Activated B cell treated with CpG ODN at 0.5 μM for 24 hours (primary cell): ENCODE measurements at regions of chr11 and their contacts with region 1.

Region 1: DNA sequence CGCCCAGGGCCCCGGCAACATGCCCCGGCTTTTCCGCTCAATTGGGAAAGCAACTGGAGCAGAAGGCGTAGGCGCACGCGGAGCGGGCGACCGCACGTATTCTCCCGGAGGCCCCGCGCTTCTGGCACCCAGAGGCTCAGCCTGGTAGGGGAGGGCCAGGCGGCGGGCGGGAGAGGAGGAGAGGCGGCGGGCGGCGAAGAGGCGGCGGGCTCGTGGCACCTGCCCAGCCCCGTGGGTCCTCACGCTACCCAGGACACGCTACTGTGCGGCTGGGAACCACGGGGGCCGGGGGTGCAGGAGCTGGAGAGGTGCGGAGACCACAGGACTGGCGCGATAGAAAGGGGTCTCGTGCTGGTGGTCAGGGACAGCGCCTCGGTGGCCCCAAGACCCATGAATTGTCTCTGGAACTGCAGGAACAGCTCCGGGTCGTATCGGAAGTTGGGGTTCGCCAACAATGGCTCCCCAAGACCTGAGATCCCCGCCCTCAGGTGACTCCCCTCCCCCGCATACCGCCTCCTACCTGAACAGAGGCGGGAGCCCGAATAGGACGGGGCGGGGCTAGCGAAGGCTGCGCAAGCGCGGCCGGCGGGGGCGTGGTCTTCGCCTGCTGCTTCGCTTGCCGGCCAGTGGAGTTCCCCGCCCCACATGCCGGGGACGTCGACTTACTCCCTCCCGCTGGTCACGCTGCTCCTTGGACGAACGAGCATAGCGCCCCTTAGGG is at the start of gene SLC37A4:
- DNase-seq: peak; percentile 99
- ATAC-seq: peak; percentile 95
- H3K4me3 Mint-ChIP-seq: peak within 1 kb of the TSS; percentile 85
- H3K27ac Mint-ChIP-seq: peak within 1 kb of the TSS; percentile 61
- H3K4me1 Mint-ChIP-seq: peaks cover 15% of the 10 kb centered on the region
- H3K27me3 Mint-ChIP-seq: no peaks in the 10 kb centered on the region
- CTCF ChIP-seq: no peak
- total RNA-seq, gene SLC37A4: 12.0 and 12.1 TPM in 2 replicates

Region 2: DNA sequence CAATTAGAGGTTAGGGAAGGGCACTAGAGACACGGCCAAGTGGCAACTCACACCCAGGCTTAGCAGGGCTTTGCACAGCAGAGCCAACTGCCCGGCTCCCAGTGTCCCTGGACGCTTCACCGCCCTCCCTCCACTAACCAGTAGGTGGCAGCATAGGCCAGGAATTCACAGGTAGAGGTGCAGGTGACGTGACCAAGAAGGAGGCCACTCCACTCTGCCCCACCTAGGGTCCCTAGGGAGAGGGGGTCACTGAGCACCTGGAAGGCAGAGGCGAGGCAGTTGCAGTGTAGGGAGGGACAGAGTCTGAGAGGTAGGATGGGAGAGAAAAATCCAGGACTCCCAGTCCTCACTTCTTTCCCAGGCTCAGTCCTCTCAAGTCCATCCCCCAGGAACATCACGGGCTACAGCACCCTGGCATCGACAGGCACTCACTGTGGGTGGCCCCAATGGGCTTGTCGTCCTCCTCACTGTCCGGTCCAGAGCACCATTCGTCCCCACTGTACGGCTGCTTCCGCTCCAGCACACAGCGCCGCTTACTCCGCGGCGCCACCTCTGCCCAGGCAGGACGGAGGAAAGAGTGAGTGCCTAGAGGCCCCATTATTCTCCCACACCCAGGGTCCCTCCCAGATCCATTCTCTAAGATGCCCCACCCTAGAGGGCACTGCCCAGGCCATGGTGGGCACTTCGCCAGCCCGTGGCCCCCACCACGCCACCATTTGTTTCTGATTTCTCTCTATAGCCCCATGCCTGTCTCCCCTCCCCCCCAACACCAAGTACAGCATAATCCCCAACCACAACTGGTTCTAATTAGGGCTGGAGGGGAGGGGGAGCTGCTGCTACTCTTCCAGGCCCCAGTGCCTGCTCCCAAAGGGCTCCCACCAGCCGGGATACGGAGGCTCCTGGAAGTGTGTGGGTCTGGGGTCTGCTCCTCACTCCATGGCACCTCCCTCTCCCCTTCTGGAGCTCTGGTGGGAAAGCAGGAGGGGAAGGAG is 123.1 kb before region 1 on chr11:
- CTCF ChIA-PET with region 1: no interaction called
- POLR2A ChIA-PET with region 1: no interaction called
- intact Hi-C with region 1: loop called (anchors 2 kb)
- DNase-seq: peak; percentile 77
- ATAC-seq: peak; percentile 85
- H3K4me3 Mint-ChIP-seq: no peak overlapping the region
- H3K27ac Mint-ChIP-seq: peak overlapping the region; percentile 53
- H3K4me1 Mint-ChIP-seq: peaks cover 39% of the 10 kb centered on the region
- H3K27me3 Mint-ChIP-seq: no peaks in the 10 kb centered on the region
- CTCF ChIP-seq: peak; percentile 64

Region 3: GRCh38 chr11:118997627-118998387 is 32.7 kb before region 1 on chr11 and contains the start of gene CENATAC:
- CTCF ChIA-PET with region 1: no interaction called
- POLR2A ChIA-PET with region 1: interaction called, 4 read pairs
- intact Hi-C with region 1: loop called (anchors 1 kb)
- DNase-seq: peak; percentile 91
- ATAC-seq: peak; percentile 95
- H3K4me3 Mint-ChIP-seq: peak within 1 kb of the TSS; percentile 95
- H3K27ac Mint-ChIP-seq: peak within 1 kb of the TSS; percentile 91
- H3K4me1 Mint-ChIP-seq: peaks cover 32% of the 10 kb centered on the region
- H3K27me3 Mint-ChIP-seq: no peaks in the 10 kb centered on the region
- CTCF ChIP-seq: no peak
- total RNA-seq, gene CENATAC: 66.4 and 85.7 TPM in 2 replicates

Region 4: GRCh38 chr11:119051440-119052162 is 21.1 kb after region 1 on chr11:
- CTCF ChIA-PET with region 1: no interaction called
- POLR2A ChIA-PET with region 1: interaction called, 7 read pairs
- intact Hi-C with region 1: loop called (anchors 1 kb)
- DNase-seq: peak; percentile 47
- ATAC-seq: peak; percentile 85
- H3K4me3 Mint-ChIP-seq: peak overlapping the region; percentile 39
- H3K27ac Mint-ChIP-seq: peak overlapping the region; percentile 71
- H3K4me1 Mint-ChIP-seq: peaks cover 40% of the 10 kb centered on the region
- H3K27me3 Mint-ChIP-seq: no peaks in the 10 kb centered on the region
- CTCF ChIP-seq: no peak

Region 5: GRCh38 chr11:119121008-119121810 is 90.7 kb after region 1 on chr11 and contains the start of gene HINFP:
- CTCF ChIA-PET with region 1: no interaction called
- POLR2A ChIA-PET with region 1: no interaction called
- intact Hi-C with region 1: loop called (anchors 1 kb)
- DNase-seq: peak; percentile 97
- ATAC-seq: peak; percentile 97
- H3K4me3 Mint-ChIP-seq: peak within 1 kb of the TSS; percentile 94
- H3K27ac Mint-ChIP-seq: peak within 1 kb of the TSS; percentile 92
- H3K4me1 Mint-ChIP-seq: peaks cover 30% of the 10 kb centered on the region
- H3K27me3 Mint-ChIP-seq: no peaks in the 10 kb centered on the region
- CTCF ChIP-seq: no peak
- total RNA-seq, gene HINFP: 47.8 and 62.6 TPM in 2 replicates